ENCODE measurements at regions of chr15 and their contacts with region 1.

Region 1: GRCh38 chr15:65646486-65646885 is 24.7 kb downstream of the SLC24A1 start:
- DNase-seq: peak; percentile 4
- H3K4me3 ChIP-seq: no peak overlapping the region
- H3K27ac ChIP-seq: no peak overlapping the region
- H3K4me1 ChIP-seq: peaks cover 5% of the 10 kb centered on the region
- H3K27me3 ChIP-seq: no peaks in the 10 kb centered on the region
- CTCF ChIP-seq: no peak

Region 2: DNA sequence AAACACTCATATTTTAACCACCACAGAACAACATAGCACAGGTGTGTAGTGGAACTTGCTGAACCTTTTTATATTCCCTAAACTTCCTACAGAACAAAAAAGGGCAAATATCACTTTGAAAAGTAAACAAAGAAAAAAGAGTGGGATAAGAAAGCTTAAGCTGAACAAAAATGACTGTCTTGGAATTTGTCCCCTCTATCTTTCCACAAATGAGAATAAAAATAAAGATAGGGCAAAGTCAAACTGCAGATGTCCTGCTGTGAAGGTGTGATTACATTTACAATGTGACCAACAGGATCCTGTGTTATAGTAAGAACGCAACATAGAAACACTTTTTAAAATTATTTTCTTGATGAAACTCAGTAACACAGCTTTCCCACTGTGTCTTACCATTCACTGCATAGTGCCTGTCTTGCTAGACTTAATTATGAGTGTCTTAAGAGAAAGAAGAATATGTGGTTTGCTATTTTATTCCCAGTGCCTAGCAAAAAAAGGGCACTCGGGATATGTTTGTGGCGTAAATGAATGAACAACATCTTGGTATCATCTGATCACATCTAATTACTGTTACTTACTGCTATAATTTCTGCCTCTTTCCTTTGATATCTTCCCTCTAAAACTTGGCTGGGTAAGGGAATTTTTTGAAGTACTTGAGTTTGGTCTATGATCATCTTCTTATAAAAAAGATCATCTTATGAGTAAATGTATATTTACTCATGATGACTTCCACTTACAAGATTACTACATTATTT is 78.2 kb after region 1 on chr15:
- CTCF ChIA-PET with region 1: no interaction called
- dilution Hi-C with region 1: loop called (anchors 5 kb)
- in situ Hi-C with region 1: no loop called
- intact Hi-C with region 1: no loop called
- DNase-seq: no peak
- H3K4me3 ChIP-seq: no peak overlapping the region
- H3K27ac ChIP-seq: no peak overlapping the region
- H3K4me1 ChIP-seq: no peaks in the 10 kb centered on the region
- H3K27me3 ChIP-seq: no peaks in the 10 kb centered on the region
- CTCF ChIP-seq: no peak